CD4-positive, alpha-beta T cell (primary cell): ENCODE measurements at regions of chr19 and their contacts with region 1.

Region 1: GRCh38 chr19:56477429-56478338 is 539 bp upstream of the ZNF667 start:
- DNase-seq: peak; percentile 13 to 67 (median 46)
- ATAC-seq: peak; percentile 70
- H3K4me3 ChIP-seq: peak overlapping the region; percentile 29
- H3K4me3 Mint-ChIP-seq: peak overlapping the region; percentile 98
- H3K27ac ChIP-seq: peak overlapping the region in 1 of 2 donors; percentile 64
- H3K27ac Mint-ChIP-seq: peak overlapping the region; percentile 91
- H3K4me1 ChIP-seq: peaks cover 3% of the 10 kb centered on the region
- H3K4me1 Mint-ChIP-seq: peaks cover 18% of the 10 kb centered on the region
- H3K27me3 ChIP-seq: peaks cover 9 to 23% of the 10 kb centered on the region in 2 experiments
- H3K27me3 Mint-ChIP-seq: peaks cover 33% of the 10 kb centered on the region
- CTCF ChIP-seq: no peak

Region 2: DNA sequence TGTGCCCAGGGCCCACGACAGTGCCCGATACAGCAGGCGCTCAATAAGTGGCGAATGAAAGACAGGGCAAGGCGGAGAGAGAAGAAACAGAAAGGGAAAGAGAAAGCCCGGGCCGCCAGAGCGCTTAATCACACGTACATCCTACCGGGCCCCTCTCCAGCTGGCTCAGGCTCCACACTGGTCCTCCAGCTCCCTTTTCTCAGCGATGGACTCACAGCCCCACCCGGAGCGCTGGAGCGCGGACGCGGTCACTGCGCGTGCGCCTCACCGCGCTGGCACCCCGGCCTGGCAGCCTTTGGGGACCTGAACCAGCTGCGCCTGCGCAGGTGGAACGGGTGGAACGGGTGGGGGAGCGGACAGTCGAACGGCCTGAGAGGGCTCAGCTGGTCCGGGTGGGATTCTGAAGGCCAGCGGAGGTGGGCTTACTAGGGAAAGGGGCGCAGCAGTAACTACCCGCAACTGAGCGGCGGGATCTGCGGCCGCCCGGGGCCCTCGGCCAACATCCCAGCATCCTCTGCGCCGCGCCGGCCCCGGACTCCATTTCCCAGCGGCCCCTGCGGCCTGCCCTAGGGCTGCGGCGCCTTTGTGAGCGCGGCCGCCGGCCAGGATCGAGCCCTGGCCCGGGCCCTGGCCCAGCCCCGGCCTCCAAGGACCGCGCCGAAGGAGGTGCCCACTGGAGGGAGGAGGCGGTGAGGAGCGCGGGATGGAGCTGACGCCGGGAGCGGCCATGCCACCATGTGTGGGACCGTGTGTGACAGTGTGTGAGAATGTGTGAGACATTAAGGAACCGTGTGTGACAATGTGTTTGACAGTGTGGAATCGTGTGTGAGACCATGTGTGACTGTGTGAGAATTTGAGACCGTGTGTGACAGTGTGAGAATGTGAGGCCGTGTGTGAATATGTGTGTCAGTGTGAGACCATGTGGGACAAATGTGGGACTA is 73.7 kb before region 1 on chr19 and contains the start of gene ZNF583:
- CTCF ChIA-PET with region 1: no interaction called
- POLR2A ChIA-PET with region 1: no interaction called
- intact Hi-C with region 1: loop called in 1 of 2 experiments (anchors 1 kb)
- DNase-seq: peak; percentile 79 to 95 (median 88)
- ATAC-seq: peak; percentile 84
- H3K4me3 ChIP-seq: peak within 1 kb of the TSS; percentile 82
- H3K4me3 Mint-ChIP-seq: peak within 1 kb of the TSS; percentile 99
- H3K27ac ChIP-seq: peak within 1 kb of the TSS; percentile 88 to 96
- H3K27ac Mint-ChIP-seq: peak within 1 kb of the TSS; percentile 95
- H3K4me1 ChIP-seq: peaks cover 22% of the 10 kb centered on the region
- H3K4me1 Mint-ChIP-seq: peaks cover 32% of the 10 kb centered on the region
- H3K27me3 ChIP-seq: no peaks in the 10 kb centered on the region
- H3K27me3 Mint-ChIP-seq: no peaks in the 10 kb centered on the region
- CTCF ChIP-seq: no peak
- total RNA-seq, gene ZNF583: 0.95 to 1.5 TPM

Region 3: DNA sequence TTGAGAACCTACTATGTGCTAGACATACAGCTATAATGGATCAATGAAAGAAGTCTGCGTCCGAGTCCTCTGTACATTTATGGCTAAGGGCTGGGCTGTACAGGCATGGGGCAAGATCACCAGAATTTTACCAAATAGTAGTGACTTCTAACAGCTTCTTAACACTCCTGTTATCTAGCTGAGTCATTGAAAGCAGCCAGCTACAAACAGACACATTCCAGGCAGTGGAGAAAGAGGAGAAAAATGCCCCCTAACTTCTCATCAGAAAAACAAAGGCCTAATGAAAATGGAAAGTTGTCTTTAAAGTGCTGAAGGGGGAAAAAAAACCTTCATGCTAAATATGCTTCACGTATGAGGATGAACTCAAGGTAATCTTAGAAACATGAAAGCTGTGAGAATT is 13.7 kb after region 1 on chr19:
- CTCF ChIA-PET with region 1: no interaction called
- POLR2A ChIA-PET with region 1: no interaction called
- intact Hi-C with region 1: no loop called
- DNase-seq: no peak
- ATAC-seq: no peak
- H3K4me3 ChIP-seq: no peak overlapping the region
- H3K4me3 Mint-ChIP-seq: no peak overlapping the region
- H3K27ac ChIP-seq: no peak overlapping the region
- H3K27ac Mint-ChIP-seq: no peak overlapping the region
- H3K4me1 ChIP-seq: no peaks in the 10 kb centered on the region
- H3K4me1 Mint-ChIP-seq: no peaks in the 10 kb centered on the region
- H3K27me3 ChIP-seq: no peaks in the 10 kb centered on the region
- H3K27me3 Mint-ChIP-seq: no peaks in the 10 kb centered on the region
- CTCF ChIP-seq: no peak

Region 4: GRCh38 chr19:56507446-56508289 is 30.0 kb after region 1 on chr19 and contains the start of gene ZNF471:
- CTCF ChIA-PET with region 1: no interaction called
- POLR2A ChIA-PET with region 1: no interaction called
- intact Hi-C with region 1: loop called in 1 of 2 experiments (anchors 2 kb)
- DNase-seq: peak; percentile 65 to 95 (median 76)
- ATAC-seq: peak; percentile 98
- H3K4me3 ChIP-seq: peak within 1 kb of the TSS; percentile 42
- H3K4me3 Mint-ChIP-seq: no peak within 1 kb of the TSS
- H3K27ac ChIP-seq: peak within 1 kb of the TSS in 1 of 2 donors; percentile 77
- H3K27ac Mint-ChIP-seq: no peak within 1 kb of the TSS
- H3K4me1 ChIP-seq: peaks cover 11% of the 10 kb centered on the region
- H3K4me1 Mint-ChIP-seq: no peaks in the 10 kb centered on the region
- H3K27me3 ChIP-seq: peaks cover 9 to 25% of the 10 kb centered on the region in 2 experiments
- H3K27me3 Mint-ChIP-seq: no peaks in the 10 kb centered on the region
- CTCF ChIP-seq: no peak
- total RNA-seq, gene ZNF471: 2.2 to 2.5 TPM

Region 5: DNA sequence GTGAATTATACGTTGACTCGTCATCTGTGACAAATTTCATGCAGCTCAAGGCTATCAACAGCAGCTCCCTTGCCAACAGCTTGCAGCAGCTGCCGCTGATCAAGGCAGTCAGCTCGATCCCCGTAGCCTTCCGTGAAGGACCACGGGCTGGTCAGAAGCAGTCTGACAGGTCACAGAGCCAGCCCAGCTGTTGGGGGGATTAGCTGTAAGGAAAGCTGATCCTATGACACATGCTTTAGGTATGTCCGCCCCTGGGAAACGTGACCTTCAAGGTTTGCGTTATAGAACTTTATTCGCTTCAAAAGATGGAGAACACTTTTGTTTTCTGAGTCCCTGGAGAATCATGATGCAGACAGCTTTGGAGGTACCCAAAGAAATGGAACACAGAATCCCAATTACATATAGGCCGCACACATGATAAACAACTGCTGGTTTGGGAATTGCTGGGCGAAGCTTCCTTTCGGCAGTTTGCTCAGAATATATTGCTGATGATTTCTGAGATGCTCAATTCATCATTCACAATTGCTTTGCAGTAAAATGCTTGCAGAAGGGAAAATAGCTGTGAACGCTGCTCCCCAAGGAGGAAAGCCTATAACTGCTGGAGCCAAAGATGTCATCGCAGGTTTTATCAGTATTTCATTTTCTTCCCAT is 579.5 kb after region 1 on chr19:
- CTCF ChIA-PET with region 1: no interaction called
- POLR2A ChIA-PET with region 1: no interaction called
- intact Hi-C with region 1: no loop called
- DNase-seq: no peak
- ATAC-seq: no peak
- H3K4me3 ChIP-seq: no peak overlapping the region
- H3K4me3 Mint-ChIP-seq: no peak overlapping the region
- H3K27ac ChIP-seq: no peak overlapping the region
- H3K27ac Mint-ChIP-seq: no peak overlapping the region
- H3K4me1 ChIP-seq: no peaks in the 10 kb centered on the region
- H3K4me1 Mint-ChIP-seq: no peaks in the 10 kb centered on the region
- H3K27me3 ChIP-seq: no peaks in the 10 kb centered on the region
- H3K27me3 Mint-ChIP-seq: no peaks in the 10 kb centered on the region
- CTCF ChIP-seq: no peak